GM13977 (cell line): ENCODE measurements at regions of chr7 and their contacts with region 1.

Region 1: GRCh38 chr7:98168181-98168905 is 42.9 kb upstream of the BHLHA15 start:
- DNase-seq: peak; percentile 91
- CTCF ChIP-seq: peak; percentile 67

Region 2: GRCh38 chr7:98021588-98022351 is 146.6 kb before region 1 on chr7:
- in situ Hi-C with region 1: loop called (anchors 10 kb)
- DNase-seq: peak; percentile 82
- CTCF ChIP-seq: peak; percentile 96

Region 3: GRCh38 chr7:98223898-98224840 is 55.8 kb after region 1 on chr7:
- in situ Hi-C with region 1: no loop called
- DNase-seq: no peak
- CTCF ChIP-seq: no peak

Region 4: DNA sequence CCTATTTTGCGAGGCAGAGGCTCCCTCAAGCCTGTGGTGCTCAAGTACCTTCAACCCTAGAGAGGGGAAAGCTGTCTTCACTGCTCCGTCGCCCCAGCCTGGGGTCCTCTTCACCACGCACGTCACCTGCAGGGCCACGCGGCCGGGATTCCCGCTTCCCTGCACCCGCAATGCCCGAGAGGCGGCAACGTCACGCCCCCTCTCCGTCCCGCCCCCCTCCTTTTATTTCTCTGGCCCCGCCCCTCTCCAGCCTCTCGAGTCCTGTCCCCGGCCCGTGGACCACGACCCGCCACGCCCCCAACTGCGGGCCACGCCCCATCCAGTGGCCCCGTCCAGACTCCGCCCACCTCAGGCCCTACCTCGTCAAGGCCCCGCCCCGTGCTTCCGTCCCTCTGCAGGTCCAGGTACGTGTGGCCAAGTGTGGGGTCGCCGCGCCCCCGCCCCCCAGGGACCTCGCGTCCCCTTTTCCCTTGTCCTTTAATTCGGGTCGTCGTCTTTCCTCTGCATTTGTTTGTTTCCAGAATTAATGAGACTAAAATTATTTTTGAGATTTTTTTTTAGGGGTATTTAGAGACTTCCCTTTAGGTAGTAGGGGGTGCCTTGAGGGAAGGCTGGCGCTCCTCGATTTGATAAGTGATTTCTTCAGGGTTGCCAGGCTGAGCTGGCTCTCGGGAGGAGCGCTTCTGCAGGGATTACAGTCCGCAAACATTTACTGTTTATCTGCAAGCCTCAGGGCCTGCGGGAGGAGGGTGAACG is 302.3 kb after region 1 on chr7:
- in situ Hi-C with region 1: no loop called
- DNase-seq: no peak
- CTCF ChIP-seq: no peak